Activated T-helper 2 cell treated with anti-CD3 and anti-CD28 coated beads, Interferon-gamma antibody, Interleukin-2, Interleukin-4, amounts not matched to agents 10 μg/mL and 5 μg/mL and 100 μg/mL, durations not matched to agents 14 hours and 24 hours and 36 hours (primary cell): ENCODE measurements at regions of chr22 and their contacts with region 1.

Region 1: GRCh38 chr22:30742291-30743256 is 47.9 kb downstream of the OSBP2 start:
- DNase-seq: no peak
- H3K4me3 Mint-ChIP-seq: peak overlapping the region; percentile 31
- H3K27ac Mint-ChIP-seq: peak overlapping the region; percentile 96
- H3K4me1 Mint-ChIP-seq: peaks cover 65% of the 10 kb centered on the region
- H3K27me3 Mint-ChIP-seq: no peaks in the 10 kb centered on the region

Region 2: DNA sequence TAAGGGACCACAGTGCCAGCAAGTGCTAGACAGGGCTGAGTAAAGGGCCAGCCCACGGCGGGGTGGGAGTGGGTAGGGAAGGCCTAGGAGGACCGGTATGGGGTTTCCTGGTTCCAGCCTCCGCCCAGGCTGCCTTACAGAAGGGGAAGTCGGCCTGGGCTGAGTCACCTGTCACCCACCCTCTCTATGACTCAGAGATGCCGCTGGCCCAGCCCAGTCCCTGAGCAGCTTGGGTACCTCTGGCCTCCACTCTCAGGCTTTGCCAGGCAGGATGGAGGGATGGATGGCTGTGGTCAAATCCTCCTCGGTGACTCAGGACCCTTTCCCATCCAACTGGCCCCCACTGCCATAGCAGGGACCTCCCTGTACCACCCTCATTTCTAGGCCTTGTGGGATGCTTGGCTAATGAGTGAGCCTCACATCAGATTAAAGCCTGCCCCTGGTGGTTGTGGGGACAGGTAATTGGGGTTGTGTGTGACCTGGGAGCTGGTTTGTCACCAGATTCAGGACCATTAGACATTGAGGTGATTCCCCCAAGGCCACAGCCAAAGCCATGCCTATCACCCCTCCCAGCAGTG is 93.1 kb before region 1 on chr22:
- intact Hi-C with region 1: loop called (anchors 1 kb)
- DNase-seq: peak; percentile 65
- H3K4me3 Mint-ChIP-seq: no peak overlapping the region
- H3K27ac Mint-ChIP-seq: peak overlapping the region; percentile 83
- H3K4me1 Mint-ChIP-seq: peaks cover 39% of the 10 kb centered on the region
- H3K27me3 Mint-ChIP-seq: no peaks in the 10 kb centered on the region

Region 3: DNA sequence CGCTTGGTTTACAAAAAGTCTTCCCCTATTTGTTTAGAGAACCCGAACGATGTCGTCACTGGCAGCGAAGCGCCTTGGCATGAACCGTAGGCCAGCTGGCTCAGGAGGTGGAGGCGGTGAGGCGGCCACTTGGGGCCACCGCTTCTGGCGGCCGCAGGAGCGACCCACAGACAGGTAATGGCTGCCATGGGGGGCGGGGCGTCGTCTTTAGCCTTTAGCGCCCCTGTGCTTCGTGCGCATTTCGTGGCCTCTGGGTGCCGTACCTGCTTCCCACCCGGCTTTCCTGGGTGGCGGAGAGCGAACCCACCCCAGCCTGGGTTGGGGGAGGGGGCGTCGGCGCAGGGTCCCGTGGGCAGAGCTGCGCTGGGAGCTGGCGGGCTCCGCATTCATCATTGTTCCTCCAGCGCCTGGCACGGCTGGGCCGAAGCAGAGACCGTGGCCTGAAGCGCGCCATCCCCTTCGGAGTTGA is 48.4 kb before region 1 on chr22:
- intact Hi-C with region 1: loop called (anchors 5 kb)
- DNase-seq: peak; percentile 40
- H3K4me3 Mint-ChIP-seq: peak overlapping the region; percentile 85
- H3K27ac Mint-ChIP-seq: peak overlapping the region; percentile 74
- H3K4me1 Mint-ChIP-seq: peaks cover 8% of the 10 kb centered on the region
- H3K27me3 Mint-ChIP-seq: peaks cover 16% of the 10 kb centered on the region

Region 4: DNA sequence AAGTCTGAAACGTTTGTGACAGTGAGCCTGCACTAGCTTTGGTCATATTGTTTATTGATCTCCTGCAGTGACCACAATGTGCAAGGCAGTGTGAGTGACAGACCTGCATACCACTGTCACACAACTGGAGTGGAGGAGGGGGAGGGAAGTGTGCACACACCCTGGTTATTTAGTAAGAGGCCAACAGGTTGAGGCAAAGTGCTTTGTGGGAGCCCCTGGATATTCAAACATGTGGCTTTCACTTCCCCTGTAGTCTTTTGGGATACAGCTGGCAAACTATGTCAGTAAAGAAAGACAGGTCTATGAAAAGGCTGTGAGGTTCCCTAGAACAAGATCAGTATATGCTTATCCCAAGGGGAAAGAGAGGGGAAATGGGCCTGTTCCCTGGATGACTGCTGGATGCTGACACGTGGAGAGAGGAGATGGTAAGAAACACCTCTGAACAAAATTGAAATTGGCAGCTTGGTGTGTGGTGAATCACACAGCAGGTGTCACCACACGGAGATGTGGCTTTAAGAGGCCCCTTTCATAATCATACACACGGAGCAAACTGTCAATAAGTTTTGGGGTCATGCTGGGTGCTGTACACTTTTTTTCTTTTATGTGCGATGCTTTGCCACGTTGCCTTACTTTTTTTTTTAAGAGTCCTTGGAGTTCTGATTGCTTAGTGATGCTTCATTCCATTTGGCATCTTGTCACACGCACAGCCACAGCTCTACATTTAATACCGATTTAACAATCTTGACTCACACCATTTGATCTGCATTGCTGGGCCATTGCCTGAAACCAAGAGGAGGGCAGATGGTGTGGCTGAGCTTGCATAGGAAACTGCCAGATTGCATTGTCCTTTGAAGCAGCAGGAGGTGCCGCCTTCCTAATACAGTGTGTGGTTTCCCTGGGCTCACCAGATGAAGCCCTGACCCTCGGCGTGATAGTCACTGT is 36.6 kb before region 1 on chr22:
- intact Hi-C with region 1: loop called (anchors 5 kb)
- DNase-seq: no peak
- H3K4me3 Mint-ChIP-seq: no peak overlapping the region
- H3K27ac Mint-ChIP-seq: peak overlapping the region; percentile 73
- H3K4me1 Mint-ChIP-seq: peaks cover 31% of the 10 kb centered on the region
- H3K27me3 Mint-ChIP-seq: no peaks in the 10 kb centered on the region

Region 5: GRCh38 chr22:30816413-30816812 is 73.8 kb after region 1 on chr22:
- intact Hi-C with region 1: no loop called
- DNase-seq: no peak
- H3K4me3 Mint-ChIP-seq: no peak overlapping the region
- H3K27ac Mint-ChIP-seq: no peak overlapping the region
- H3K4me1 Mint-ChIP-seq: no peaks in the 10 kb centered on the region
- H3K27me3 Mint-ChIP-seq: peaks cover 17% of the 10 kb centered on the region

Region 6: DNA sequence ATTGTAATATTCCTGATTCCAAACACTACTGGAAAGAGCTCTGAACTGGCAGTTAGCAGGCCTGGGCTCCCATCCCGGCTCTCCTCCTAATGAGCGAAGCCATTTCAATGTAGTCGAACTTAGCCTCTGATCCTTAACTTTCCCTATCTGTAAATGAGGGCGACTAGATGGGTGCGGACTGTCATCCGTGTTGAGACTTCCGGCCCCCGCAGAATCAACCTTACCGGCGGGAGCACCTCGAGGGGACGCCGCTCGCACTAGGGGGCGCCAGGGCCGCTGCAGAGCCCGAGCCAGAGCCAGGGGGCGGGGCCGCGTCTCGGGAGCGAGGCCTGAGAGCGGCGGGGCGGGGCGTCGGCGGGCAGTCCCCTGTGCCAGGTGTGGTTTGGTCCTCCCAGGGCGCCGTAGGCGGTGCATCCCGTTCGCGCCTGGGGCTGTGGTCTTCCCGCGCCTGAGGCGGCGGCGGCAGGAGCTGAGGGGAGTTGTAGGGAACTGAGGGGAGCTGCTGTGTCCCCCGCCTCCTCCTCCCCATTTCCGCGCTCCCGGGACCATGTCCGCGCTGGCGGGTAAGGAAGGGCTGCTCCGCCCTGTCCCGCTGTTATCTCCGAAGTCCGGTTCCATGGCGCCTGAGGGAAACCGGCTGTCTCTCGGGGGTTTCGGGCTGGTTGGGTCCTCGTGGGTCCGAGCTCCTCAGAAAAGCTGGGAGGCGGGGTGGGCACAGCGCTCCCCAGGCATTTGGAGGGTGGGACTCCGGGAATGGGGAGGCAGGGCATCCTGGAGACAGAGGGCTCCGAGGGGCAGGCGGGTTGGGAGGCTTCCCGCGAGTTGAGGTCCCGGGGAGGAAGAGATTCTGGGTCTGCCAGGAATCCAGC is 469.5 kb after region 1 on chr22 and contains the start of gene LIMK2:
- intact Hi-C with region 1: loop called (anchors 5 kb)
- DNase-seq: peak; percentile 95
- H3K4me3 Mint-ChIP-seq: peak within 1 kb of the TSS; percentile 85
- H3K27ac Mint-ChIP-seq: peak within 1 kb of the TSS; percentile 70
- H3K4me1 Mint-ChIP-seq: peaks cover 40% of the 10 kb centered on the region
- H3K27me3 Mint-ChIP-seq: no peaks in the 10 kb centered on the region
- total RNA-seq, gene LIMK2: 31.1 and 33.9 TPM in 2 replicates